Breast epithelium (tissue), 4 donors: ENCODE measurements at regions of chr19 and their contacts with region 1.

Region 1: GRCh38 chr19:48391107-48391986 is at the start of gene KDELR1:
- DNase-seq: peak; percentile 56 to 78
- H3K4me3 ChIP-seq: peak within 1 kb of the TSS; percentile 76 to 80 (median 78)
- H3K27ac ChIP-seq: peak within 1 kb of the TSS; percentile 95 to 97
- H3K4me1 ChIP-seq: peaks cover 0 to 9% of the 10 kb centered on the region in 2 donors
- H3K27me3 ChIP-seq: peaks cover 12 to 25% of the 10 kb centered on the region in 2 donors
- CTCF ChIP-seq: peak; percentile 63 to 82 (median 74)
- POLR2A ChIP-seq: peak; percentile 50
- total RNA-seq, gene KDELR1: 66.2 to 85.0 (median 68.5) TPM

Region 2: DNA sequence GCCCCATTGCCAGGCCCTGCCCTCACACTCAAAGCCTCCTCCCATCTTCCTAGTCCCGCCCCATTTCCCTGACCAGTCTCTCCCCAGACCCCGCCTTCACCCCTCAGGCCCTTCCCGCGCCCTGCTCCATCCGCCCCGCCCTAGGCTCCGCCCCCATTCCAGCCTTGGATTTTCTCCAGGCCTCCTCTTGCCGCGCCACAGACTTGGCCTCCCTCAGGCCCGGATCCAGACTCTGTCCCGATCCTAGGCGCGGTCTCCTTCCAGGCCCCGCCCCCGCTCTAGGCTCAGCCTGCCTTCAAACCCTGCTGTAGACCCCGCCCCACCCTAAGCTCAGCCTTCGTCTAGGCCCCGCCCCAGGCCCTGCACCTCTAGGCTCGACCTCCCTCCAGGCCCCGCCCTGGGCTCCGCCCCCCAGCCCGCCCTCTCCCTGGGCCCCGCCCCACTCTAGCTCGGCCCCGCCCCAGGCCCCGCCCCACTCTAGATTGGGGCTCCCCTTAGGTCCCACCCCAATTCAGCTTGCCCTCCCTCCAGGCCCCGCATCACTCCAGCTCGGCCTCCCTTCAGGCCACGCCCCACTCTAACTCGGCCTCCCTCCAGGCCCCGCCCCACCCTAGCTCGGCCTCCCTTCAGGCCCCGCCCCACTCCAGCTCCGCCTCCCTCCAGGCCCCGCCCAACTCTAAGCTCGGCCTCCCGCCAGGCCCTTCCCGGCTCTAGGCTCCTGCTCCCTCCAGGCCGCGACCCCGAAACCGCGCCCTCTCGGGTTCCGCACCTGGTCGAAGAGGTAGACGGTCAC is 101.8 kb after region 1 on chr19:
- intact Hi-C with region 1: loop called (anchors 5 kb)
- DNase-seq: peak; percentile 97 to 99
- H3K4me3 ChIP-seq: peak overlapping the region; percentile 48 to 74 (median 58)
- H3K27ac ChIP-seq: peak overlapping the region; percentile 82
- H3K4me1 ChIP-seq: no peaks in the 10 kb centered on the region
- H3K27me3 ChIP-seq: no peaks in the 10 kb centered on the region
- CTCF ChIP-seq: no peak
- POLR2A ChIP-seq: peak; percentile 61

Region 3: GRCh38 chr19:49599378-49600295 is 1208.3 kb after region 1 on chr19:
- intact Hi-C with region 1: loop called (anchors 10 kb)
- DNase-seq: no peak
- H3K4me3 ChIP-seq: no peak overlapping the region
- H3K27ac ChIP-seq: no peak overlapping the region
- H3K4me1 ChIP-seq: no peaks in the 10 kb centered on the region
- H3K27me3 ChIP-seq: no peaks in the 10 kb centered on the region
- CTCF ChIP-seq: no peak
- POLR2A ChIP-seq: no peak